MCF 10A (cell line): ENCODE measurements at regions of chr1 and their contacts with region 1.

Region 1: DNA sequence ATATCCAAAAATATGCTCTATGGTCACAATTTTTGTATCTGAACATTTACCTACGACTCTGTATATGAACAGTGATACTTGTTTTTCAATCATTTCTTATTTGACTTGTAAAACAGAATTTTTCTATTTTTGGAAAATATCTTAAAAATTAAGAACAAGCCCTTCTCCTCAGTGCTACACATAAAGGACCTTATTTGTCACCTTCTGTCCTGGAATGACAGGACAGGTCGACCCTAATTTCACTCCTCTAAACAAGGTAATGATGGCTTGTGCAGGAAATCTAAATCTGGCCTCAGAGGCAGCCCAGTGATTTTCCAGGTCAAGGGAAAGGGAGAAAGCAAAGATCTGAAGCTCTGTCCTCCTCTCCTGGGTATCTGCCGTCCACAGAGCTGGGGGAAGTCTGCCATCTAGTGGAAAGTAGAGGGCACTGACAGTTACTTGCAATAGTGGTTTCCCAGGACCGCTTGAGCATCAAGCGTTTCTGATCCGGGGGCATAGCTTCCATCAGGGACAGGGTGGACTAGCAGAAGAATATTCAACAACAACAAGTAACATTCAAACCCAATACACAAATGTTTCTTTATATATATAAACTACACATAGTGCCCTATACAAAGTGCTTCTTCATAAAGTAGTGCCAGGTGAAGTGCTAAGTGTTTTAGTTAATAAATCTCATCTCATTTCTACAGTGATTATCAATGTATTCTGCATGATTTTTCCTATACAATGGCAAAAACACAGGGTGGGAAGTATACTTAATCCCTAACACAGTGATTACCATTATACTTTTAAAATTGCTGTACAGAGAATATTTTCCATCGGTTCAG is 74.6 kb downstream of the SLC25A24 start:
- DNase-seq: peak; percentile 82
- H3K4me3 Mint-ChIP-seq: no peak overlapping the region
- H3K27ac Mint-ChIP-seq: no peak overlapping the region
- H3K4me1 Mint-ChIP-seq: no peaks in the 10 kb centered on the region
- H3K27me3 Mint-ChIP-seq: peaks cover 14% of the 10 kb centered on the region
- CTCF ChIP-seq: peak; percentile 90

Region 2: GRCh38 chr1:107782217-107782845 is 343.2 kb before region 1 on chr1:
- CTCF ChIA-PET with region 1: interaction called, 382 read pairs
- POLR2A ChIA-PET with region 1: interaction called, 31 read pairs
- intact Hi-C with region 1: loop called (anchors 1 kb)
- DNase-seq: peak; percentile 68
- H3K4me3 Mint-ChIP-seq: no peak overlapping the region
- H3K27ac Mint-ChIP-seq: no peak overlapping the region
- H3K4me1 Mint-ChIP-seq: no peaks in the 10 kb centered on the region
- H3K27me3 Mint-ChIP-seq: no peaks in the 10 kb centered on the region
- CTCF ChIP-seq: peak; percentile 60

Region 3: GRCh38 chr1:107817935-107818334 is 307.6 kb before region 1 on chr1:
- CTCF ChIA-PET with region 1: interaction called, 14 read pairs
- POLR2A ChIA-PET with region 1: no interaction called
- intact Hi-C with region 1: no loop called
- DNase-seq: no peak
- H3K4me3 Mint-ChIP-seq: no peak overlapping the region
- H3K27ac Mint-ChIP-seq: no peak overlapping the region
- H3K4me1 Mint-ChIP-seq: peaks cover 6% of the 10 kb centered on the region
- H3K27me3 Mint-ChIP-seq: no peaks in the 10 kb centered on the region
- CTCF ChIP-seq: no peak

Region 4: DNA sequence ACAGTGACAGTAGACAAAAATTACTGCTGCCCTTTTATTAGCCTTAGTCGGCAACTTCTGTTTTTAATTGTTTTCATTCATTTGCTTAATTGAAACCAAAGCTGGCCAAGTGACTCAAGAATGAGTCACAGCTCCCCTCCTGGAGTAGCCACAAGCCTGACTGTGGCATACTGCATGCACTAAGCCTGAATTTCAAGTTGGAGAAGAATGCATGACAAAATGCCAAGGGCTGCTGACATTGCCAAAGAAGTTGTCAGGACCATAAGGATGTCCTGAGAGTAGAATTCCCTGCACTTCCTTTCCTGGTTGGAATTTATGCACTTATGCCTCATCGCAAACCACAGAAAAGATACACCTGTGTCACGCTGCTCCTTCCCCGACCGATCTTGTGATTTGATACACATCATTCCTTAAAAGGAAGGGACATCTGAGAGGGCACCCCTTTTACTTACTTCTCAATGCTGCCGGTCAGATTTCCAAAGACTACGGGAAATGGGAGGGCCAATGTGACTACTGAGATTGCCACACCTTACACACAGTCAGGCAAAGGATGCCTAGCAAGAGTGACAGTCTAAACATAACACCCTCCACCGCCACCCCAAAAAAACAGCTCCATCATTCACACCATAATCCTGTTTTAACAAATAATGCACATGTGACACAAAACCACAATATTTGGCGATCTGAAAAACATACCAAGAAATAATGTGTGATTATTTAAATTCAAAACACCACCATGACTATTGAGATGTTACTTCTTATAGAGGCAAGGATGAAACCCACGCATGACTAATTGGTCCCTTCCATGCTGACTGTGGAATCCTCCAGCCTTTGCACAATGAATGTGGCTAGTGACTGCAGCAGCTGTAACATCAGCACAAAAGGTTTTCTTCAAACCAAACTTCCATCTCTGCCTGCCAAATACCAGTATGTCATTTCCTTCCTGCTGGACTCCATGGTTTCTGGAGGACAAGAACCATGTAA is 188.7 kb before region 1 on chr1:
- CTCF ChIA-PET with region 1: no interaction called
- POLR2A ChIA-PET with region 1: no interaction called
- intact Hi-C with region 1: loop called (anchors 2 kb)
- DNase-seq: peak; percentile 97
- H3K4me3 Mint-ChIP-seq: no peak overlapping the region
- H3K27ac Mint-ChIP-seq: peak overlapping the region; percentile 52
- H3K4me1 Mint-ChIP-seq: peaks cover 28% of the 10 kb centered on the region
- H3K27me3 Mint-ChIP-seq: no peaks in the 10 kb centered on the region
- CTCF ChIP-seq: no peak

Region 5: DNA sequence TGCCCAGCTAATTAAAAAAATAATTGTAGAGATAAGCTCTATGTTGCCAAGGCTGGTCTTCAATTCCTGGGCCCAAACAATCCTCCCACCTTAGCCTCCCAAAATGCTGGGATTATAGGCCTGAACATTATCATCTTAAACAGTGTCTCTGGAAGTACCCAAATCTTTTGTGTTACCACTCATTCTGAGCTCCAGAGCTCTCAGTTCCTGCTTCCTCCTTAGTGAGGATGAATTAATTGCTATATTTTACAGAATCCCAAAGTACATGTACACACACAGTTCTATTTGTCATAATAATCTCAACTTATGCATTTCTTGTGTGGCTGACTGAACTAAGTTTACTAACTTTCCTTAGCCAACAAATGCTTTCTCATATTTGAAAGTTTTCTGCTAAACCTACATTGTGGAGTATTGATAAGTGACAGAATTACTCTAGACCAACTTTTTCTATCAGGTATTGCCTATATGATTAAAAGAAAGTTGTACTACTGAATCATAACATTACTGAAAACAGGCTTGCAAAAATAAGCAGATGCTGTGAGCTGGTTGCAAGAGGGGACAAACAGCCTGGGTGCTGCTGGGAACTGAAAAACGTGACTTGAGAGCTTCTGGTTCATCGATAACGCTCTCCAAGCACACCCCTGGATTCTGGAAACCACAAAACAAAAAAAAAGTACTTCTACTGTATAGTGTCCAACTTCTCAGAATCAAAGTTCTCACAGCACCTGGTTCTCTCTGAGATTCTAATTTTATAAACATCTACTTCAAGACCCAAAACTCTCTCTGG is 175.9 kb before region 1 on chr1:
- CTCF ChIA-PET with region 1: no interaction called
- POLR2A ChIA-PET with region 1: no interaction called
- intact Hi-C with region 1: no loop called
- DNase-seq: no peak
- H3K4me3 Mint-ChIP-seq: no peak overlapping the region
- H3K27ac Mint-ChIP-seq: no peak overlapping the region
- H3K4me1 Mint-ChIP-seq: no peaks in the 10 kb centered on the region
- H3K27me3 Mint-ChIP-seq: no peaks in the 10 kb centered on the region
- CTCF ChIP-seq: no peak

Region 6: GRCh38 chr1:108199781-108200570 is 74.5 kb after region 1 on chr1 and contains the start of gene SLC25A24:
- CTCF ChIA-PET with region 1: interaction called, 13 read pairs
- POLR2A ChIA-PET with region 1: interaction called, 3 read pairs
- intact Hi-C with region 1: no loop called
- DNase-seq: peak; percentile 81
- H3K4me3 Mint-ChIP-seq: peak within 1 kb of the TSS; percentile 92
- H3K27ac Mint-ChIP-seq: peak within 1 kb of the TSS; percentile 91
- H3K4me1 Mint-ChIP-seq: peaks cover 27% of the 10 kb centered on the region
- H3K27me3 Mint-ChIP-seq: no peaks in the 10 kb centered on the region
- CTCF ChIP-seq: no peak
- total RNA-seq, gene SLC25A24: 21.0 and 28.3 TPM in 2 replicates

Region 7: DNA sequence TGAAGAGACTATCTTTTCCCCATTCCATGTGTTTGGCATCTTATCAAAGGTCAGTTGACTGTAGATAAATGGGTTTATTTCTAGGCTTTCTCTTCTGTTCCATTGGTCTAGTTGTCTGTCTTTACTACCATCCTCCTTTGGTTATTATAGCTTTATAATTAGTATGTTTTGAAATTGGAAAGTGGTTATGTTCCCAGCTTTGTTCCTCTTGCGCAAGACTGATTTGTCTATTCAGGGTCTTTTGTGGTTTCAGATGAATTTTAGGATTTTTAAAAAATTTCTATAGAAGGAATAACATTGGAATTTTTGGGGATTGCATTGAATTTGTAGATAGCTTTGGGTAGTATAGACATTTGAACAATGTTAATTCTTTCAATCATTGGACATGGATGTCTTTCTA is 195.3 kb after region 1 on chr1:
- CTCF ChIA-PET with region 1: no interaction called
- POLR2A ChIA-PET with region 1: no interaction called
- intact Hi-C with region 1: no loop called
- DNase-seq: no peak
- H3K4me3 Mint-ChIP-seq: no peak overlapping the region
- H3K27ac Mint-ChIP-seq: no peak overlapping the region
- H3K4me1 Mint-ChIP-seq: no peaks in the 10 kb centered on the region
- H3K27me3 Mint-ChIP-seq: peaks cover 62% of the 10 kb centered on the region
- CTCF ChIP-seq: no peak

Region 8: DNA sequence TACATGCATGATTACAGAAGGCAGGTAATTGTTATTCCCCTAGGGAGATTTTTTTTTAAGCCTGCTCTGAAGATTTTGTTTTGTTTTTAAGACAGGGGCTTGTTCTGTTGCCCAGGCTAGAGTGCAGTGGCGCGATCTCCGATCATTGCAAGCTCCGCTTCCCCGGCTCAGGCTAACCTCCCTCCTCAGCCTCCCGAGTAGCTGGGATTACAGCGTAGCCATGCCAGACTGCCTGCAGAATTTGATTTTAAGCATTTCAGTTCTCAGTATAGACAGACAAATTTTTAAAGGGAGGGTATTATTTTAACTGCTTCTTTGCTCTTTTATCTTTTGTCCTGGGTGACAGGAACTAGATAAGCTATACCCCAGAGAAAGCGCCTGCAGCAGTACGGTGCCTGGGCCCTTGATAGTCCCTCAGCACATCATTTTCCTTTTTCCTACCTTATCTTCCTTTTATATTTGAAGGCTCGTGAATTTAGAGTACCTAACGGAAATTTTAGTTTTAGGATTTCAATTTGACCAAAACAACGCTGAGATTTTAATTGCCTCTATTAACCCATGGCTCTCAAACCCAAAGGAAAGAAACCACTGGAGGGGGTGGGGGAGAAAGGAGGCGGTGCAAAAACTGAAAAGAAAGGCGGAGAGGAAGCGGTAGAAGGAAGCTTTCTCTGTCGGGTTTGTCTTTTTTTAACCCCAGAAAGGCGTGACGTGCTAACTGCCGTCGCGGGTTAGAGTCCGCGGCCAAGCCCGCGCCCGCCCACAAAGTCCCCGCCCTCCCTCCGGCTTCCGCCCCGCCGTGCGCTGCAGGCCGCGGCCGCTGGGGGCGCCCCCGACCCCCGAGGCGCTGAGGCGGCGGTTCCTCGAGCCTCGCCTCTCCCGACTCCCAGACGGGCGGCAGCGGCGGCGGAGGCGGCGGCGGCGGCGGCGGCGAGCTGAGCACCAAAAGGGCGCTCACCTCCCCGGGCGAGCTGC is 434.0 kb after region 1 on chr1 and contains the start of gene EEIG2:
- CTCF ChIA-PET with region 1: no interaction called
- POLR2A ChIA-PET with region 1: no interaction called
- intact Hi-C with region 1: no loop called
- DNase-seq: peak; percentile 82
- H3K4me3 Mint-ChIP-seq: peak within 1 kb of the TSS; percentile 78
- H3K27ac Mint-ChIP-seq: no peak within 1 kb of the TSS
- H3K4me1 Mint-ChIP-seq: no peaks in the 10 kb centered on the region
- H3K27me3 Mint-ChIP-seq: no peaks in the 10 kb centered on the region
- CTCF ChIP-seq: peak; percentile 71
- total RNA-seq, gene EEIG2: 0.63 and 0.93 TPM in 2 replicates